Colonic mucosa (tissue), 4 donors: ENCODE measurements at regions of chr11 and their contacts with region 1.

Region 1: GRCh38 chr11:68312117-68312779 is at the start of gene LRP5:
- DNase-seq: no peak
- H3K4me3 ChIP-seq: peak within 1 kb of the TSS; percentile 67
- H3K27ac ChIP-seq: peak within 1 kb of the TSS; percentile 71
- H3K4me1 ChIP-seq: peaks cover 18% of the 10 kb centered on the region
- H3K27me3 ChIP-seq: no peaks in the 10 kb centered on the region
- CTCF ChIP-seq: no peak
- total RNA-seq, gene LRP5: 81.0 to 110 TPM

Region 2: GRCh38 chr11:68235650-68236049 is 76.6 kb before region 1 on chr11:
- intact Hi-C with region 1: no loop called
- DNase-seq: no peak
- H3K4me3 ChIP-seq: no peak overlapping the region
- H3K27ac ChIP-seq: no peak overlapping the region
- H3K4me1 ChIP-seq: no peaks in the 10 kb centered on the region
- H3K27me3 ChIP-seq: no peaks in the 10 kb centered on the region
- CTCF ChIP-seq: no peak

Region 3: GRCh38 chr11:68383976-68384501 is 71.8 kb after region 1 on chr11:
- intact Hi-C with region 1: loop called (anchors 10 kb)
- DNase-seq: peak; percentile 79
- H3K4me3 ChIP-seq: no peak overlapping the region
- H3K27ac ChIP-seq: no peak overlapping the region
- H3K4me1 ChIP-seq: peaks cover 28% of the 10 kb centered on the region
- H3K27me3 ChIP-seq: no peaks in the 10 kb centered on the region
- CTCF ChIP-seq: peak; percentile 95